Activated T-helper 2 cell treated with anti-CD3 and anti-CD28 coated beads, Interferon-gamma antibody, Interleukin-2, Interleukin-4, amounts not matched to agents 10 μg/mL and 5 μg/mL and 100 μg/mL, durations not matched to agents 14 hours and 24 hours and 36 hours (primary cell): ENCODE measurements at regions of chr10 and their contacts with region 1.

Region 1: DNA sequence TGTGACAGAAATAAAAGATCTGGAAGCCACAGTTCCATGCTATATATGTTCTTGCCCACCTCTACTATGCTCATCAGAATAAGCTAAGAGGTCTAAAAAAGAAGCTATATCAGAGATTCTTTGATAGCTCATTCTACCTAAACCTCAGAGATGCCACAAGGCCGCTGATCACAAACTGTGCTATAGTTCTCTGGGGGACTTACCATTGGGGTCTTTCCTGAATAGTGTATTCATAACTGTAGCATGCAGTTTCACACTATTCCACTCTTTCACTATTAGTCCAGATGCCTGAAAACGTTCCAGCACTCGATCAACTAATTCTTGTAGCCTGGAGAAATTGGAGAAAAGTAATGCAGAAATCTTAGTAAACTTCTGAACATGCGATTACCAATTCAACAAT is 44.5 kb upstream of the SPOCK2 start:
- DNase-seq: no peak
- H3K4me3 Mint-ChIP-seq: no peak overlapping the region
- H3K27ac Mint-ChIP-seq: no peak overlapping the region
- H3K4me1 Mint-ChIP-seq: peaks cover 29% of the 10 kb centered on the region
- H3K27me3 Mint-ChIP-seq: no peaks in the 10 kb centered on the region

Region 2: DNA sequence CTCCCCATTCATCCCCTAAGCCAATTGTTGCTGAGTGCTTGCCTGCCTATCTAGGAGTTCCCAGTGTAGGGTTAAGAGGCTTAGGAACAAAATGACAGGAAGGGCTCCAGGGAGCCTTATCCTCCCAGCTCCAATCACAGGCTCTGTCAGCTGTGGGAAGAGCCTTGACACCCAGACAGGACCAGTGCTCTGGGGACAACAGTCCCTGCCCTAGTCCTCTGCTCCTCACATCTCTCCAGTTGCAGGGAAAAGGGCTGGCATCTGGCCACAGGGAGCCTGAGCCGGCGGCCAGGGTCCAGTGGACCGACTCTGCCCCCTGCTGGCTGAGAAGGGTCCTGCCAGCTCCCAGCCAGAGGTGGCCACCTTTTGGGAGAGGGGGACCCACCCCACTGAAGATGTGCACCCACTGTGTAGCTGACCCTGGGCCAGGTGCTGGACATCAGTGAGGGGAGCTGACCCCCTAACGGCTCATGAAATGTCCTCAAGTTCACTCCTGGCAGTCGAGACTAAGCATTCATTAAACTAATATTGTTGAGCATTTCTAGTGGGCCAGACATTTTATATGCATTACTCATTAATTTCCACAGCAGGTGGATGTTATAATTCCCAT is 204.3 kb after region 1 on chr10:
- intact Hi-C with region 1: loop called (anchors 1 kb)
- DNase-seq: peak; percentile 58
- H3K4me3 Mint-ChIP-seq: no peak overlapping the region
- H3K27ac Mint-ChIP-seq: peak overlapping the region; percentile 90
- H3K4me1 Mint-ChIP-seq: peaks cover 53% of the 10 kb centered on the region
- H3K27me3 Mint-ChIP-seq: no peaks in the 10 kb centered on the region